Endothelial cell of umbilical vein (primary cell): ENCODE measurements at regions of chr18 and their contacts with region 1.

Region 1: DNA sequence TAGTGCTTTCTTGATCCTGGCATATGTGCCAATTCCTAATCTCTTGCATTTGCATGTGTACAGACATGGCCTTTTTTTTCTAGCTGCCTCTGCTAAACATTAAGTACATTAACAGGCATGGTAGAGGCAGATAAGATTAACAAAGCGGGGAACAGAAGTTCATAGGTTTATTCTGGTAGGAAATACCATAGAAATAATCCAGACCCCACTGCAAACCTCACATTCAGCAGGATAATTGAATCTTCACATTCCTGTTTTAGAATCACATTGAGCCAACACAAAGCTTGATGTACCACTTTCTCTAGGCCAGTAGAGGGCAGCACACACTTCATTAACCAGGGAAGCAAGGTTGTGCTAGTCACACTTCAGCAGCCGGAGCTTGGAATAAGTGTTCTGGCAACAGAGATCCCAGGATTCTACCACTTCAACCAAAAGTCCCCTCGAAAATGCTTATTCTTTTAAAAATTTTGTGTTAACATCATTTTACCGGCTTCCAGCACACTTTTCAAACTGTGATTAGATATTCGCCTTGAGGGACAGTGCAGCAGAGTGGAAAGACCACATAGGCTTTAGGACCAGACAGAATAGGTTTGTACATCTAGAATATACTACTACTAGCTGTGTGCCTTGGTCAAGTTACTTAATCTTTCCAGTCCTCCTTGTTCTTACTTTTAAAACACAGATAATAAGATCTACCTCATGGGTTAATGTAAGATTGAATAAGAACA is 420.2 kb upstream of the CHST9 start:
- DNase-seq: peak; percentile 49
- H3K4me3 ChIP-seq: no peak overlapping the region
- H3K27ac ChIP-seq: no peak overlapping the region
- H3K4me1 ChIP-seq: no peaks in the 10 kb centered on the region
- H3K27me3 ChIP-seq: peaks cover 0 to 2% of the 10 kb centered on the region in 2 experiments
- CTCF ChIP-seq: peak; percentile 65 to 80
- POLR2A ChIP-seq: no peak

Region 2: GRCh38 chr18:26307189-26307773 is 1298.0 kb before region 1 on chr18:
- CTCF ChIA-PET with region 1: interaction called, 40 read pairs
- POLR2A ChIA-PET with region 1: no interaction called
- dilution Hi-C with region 1: no loop called
- intact Hi-C with region 1: no loop called
- DNase-seq: peak; percentile 70
- H3K4me3 ChIP-seq: no peak overlapping the region
- H3K27ac ChIP-seq: no peak overlapping the region
- H3K4me1 ChIP-seq: peaks cover 3% of the 10 kb centered on the region
- H3K27me3 ChIP-seq: no peaks in the 10 kb centered on the region
- CTCF ChIP-seq: peak; percentile 43 to 57
- POLR2A ChIP-seq: no peak

Region 3: GRCh38 chr18:26621161-26622026 is 983.9 kb before region 1 on chr18:
- CTCF ChIA-PET with region 1: interaction called, 18 read pairs
- POLR2A ChIA-PET with region 1: no interaction called
- dilution Hi-C with region 1: no loop called
- intact Hi-C with region 1: no loop called
- DNase-seq: peak; percentile 15
- H3K4me3 ChIP-seq: no peak overlapping the region
- H3K27ac ChIP-seq: no peak overlapping the region
- H3K4me1 ChIP-seq: no peaks in the 10 kb centered on the region
- H3K27me3 ChIP-seq: no peaks in the 10 kb centered on the region
- CTCF ChIP-seq: peak; percentile 31 to 56
- POLR2A ChIP-seq: no peak

Region 4: GRCh38 chr18:27558388-27559155 is 46.7 kb before region 1 on chr18:
- CTCF ChIA-PET with region 1: no interaction called
- POLR2A ChIA-PET with region 1: no interaction called
- dilution Hi-C with region 1: no loop called
- intact Hi-C with region 1: no loop called
- DNase-seq: no peak
- H3K4me3 ChIP-seq: no peak overlapping the region
- H3K27ac ChIP-seq: no peak overlapping the region
- H3K4me1 ChIP-seq: no peaks in the 10 kb centered on the region
- H3K27me3 ChIP-seq: no peaks in the 10 kb centered on the region
- CTCF ChIP-seq: no peak
- POLR2A ChIP-seq: no peak

Region 5: DNA sequence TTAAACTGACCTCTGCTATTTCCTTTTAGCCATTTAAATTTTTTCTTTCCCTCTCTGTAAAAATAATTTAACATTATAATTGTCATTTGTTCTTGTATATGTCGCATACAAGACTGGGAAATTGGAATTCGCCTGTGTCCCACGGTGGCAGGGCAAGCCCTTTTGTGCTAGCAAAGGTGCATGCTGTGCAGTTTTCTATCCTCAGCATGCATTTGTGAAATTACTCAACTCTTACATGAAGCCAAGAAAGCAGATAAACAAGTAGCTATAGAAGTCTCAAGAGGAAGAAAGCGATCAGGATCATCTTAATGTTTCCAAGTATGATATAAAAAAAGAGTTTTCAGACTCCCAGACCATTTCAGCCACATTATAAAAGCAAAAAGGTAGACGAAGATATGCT is 27.5 kb before region 1 on chr18:
- CTCF ChIA-PET with region 1: no interaction called
- POLR2A ChIA-PET with region 1: no interaction called
- dilution Hi-C with region 1: no loop called
- intact Hi-C with region 1: no loop called
- DNase-seq: no peak
- H3K4me3 ChIP-seq: no peak overlapping the region
- H3K27ac ChIP-seq: no peak overlapping the region
- H3K4me1 ChIP-seq: no peaks in the 10 kb centered on the region
- H3K27me3 ChIP-seq: no peaks in the 10 kb centered on the region
- CTCF ChIP-seq: no peak
- POLR2A ChIP-seq: no peak

Region 6: GRCh38 chr18:27616324-27616723 is 11.1 kb after region 1 on chr18:
- CTCF ChIA-PET with region 1: interaction called, 19 read pairs
- POLR2A ChIA-PET with region 1: no interaction called
- dilution Hi-C with region 1: no loop called
- intact Hi-C with region 1: no loop called
- DNase-seq: no peak
- H3K4me3 ChIP-seq: no peak overlapping the region
- H3K27ac ChIP-seq: no peak overlapping the region
- H3K4me1 ChIP-seq: no peaks in the 10 kb centered on the region
- H3K27me3 ChIP-seq: peaks cover 0 to 2% of the 10 kb centered on the region in 2 experiments
- CTCF ChIP-seq: no peak
- POLR2A ChIP-seq: no peak

Region 7: DNA sequence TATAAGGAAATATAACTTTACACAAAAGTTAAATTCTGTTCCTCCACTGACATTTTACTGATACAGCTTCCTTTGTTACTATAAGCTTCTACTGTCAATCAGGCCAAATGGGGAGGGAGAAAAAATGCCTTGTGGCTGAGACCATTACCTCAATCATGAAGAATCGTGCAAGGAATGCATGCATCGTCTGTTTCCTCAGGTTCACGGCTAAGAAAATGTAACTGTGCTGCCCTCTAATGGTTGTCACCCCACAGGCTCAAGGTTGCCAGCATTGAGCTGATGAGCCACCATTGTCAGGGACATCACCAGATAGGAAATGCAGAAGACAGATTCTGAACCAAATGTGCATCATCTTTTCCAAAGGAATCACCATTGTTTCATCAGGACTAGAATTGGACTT is 144.7 kb after region 1 on chr18:
- CTCF ChIA-PET with region 1: interaction called, 94 read pairs
- POLR2A ChIA-PET with region 1: no interaction called
- dilution Hi-C with region 1: no loop called
- intact Hi-C with region 1: loop called (anchors 1 kb)
- DNase-seq: peak; percentile 29
- H3K4me3 ChIP-seq: no peak overlapping the region
- H3K27ac ChIP-seq: no peak overlapping the region
- H3K4me1 ChIP-seq: no peaks in the 10 kb centered on the region
- H3K27me3 ChIP-seq: peaks cover 0 to 4% of the 10 kb centered on the region in 2 experiments
- CTCF ChIP-seq: peak; percentile 53 to 56
- POLR2A ChIP-seq: no peak

Region 8: GRCh38 chr18:28189400-28190239 is 584.3 kb after region 1 on chr18:
- CTCF ChIA-PET with region 1: interaction called, 6 read pairs
- POLR2A ChIA-PET with region 1: no interaction called
- dilution Hi-C with region 1: no loop called
- intact Hi-C with region 1: loop called (anchors 1 kb)
- DNase-seq: peak; percentile 73
- H3K4me3 ChIP-seq: no peak overlapping the region
- H3K27ac ChIP-seq: no peak overlapping the region
- H3K4me1 ChIP-seq: no peaks in the 10 kb centered on the region
- H3K27me3 ChIP-seq: no peaks in the 10 kb centered on the region
- CTCF ChIP-seq: peak; percentile 67
- POLR2A ChIP-seq: no peak